ENCODE measurements at regions of chr3 and their contacts with region 1.

Region 1: DNA sequence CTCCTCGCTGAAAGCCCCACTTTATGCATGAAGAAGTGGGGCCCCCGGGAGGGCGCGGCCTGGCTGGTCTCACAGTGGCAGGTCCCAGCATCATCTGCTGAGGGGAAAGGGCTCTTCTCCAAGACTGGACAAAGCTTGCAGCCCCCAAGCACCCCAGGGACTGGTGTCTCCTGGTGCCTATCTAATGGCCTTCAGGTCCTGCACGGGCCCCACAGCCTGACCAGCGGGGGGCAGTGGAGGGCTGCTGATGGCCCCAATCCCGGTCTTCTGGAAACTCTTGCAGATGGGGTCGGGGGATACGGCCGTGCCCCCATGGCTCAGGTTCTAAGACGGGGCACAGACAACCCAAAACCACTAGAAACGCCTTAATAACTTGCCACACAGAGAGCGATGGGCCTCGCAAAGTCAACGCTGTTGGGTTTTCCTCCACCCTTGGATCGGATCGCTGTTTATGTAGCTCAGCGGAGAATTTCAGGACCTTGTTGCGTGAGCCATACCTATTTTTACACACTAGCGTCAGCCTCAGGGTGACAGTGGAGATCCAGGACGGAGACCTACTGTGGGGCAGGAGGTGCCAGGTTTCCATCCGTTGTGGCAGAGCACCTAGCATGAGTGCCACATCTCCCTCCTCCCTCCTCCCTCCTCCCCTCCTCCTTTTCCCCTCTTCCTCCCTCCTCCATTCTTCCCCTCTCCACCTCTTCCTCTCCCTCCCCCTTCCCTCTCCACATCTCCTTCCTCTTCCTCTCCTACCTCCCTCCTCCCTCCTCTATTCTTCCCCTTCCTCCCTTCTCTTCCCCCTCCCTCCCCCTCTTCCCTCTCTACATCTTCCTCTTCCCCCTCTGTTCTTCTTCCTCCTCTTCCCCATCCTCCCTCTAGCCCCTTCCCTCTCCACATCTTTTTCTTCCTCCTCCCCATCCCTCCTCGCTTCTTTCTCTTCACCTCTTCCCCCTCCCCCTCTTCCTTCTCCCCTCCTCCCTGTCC is 79.3 kb upstream of the ALDH1L1 start:
- DNase-seq: peak; percentile 78
- ATAC-seq: peak; percentile 93

Region 2: DNA sequence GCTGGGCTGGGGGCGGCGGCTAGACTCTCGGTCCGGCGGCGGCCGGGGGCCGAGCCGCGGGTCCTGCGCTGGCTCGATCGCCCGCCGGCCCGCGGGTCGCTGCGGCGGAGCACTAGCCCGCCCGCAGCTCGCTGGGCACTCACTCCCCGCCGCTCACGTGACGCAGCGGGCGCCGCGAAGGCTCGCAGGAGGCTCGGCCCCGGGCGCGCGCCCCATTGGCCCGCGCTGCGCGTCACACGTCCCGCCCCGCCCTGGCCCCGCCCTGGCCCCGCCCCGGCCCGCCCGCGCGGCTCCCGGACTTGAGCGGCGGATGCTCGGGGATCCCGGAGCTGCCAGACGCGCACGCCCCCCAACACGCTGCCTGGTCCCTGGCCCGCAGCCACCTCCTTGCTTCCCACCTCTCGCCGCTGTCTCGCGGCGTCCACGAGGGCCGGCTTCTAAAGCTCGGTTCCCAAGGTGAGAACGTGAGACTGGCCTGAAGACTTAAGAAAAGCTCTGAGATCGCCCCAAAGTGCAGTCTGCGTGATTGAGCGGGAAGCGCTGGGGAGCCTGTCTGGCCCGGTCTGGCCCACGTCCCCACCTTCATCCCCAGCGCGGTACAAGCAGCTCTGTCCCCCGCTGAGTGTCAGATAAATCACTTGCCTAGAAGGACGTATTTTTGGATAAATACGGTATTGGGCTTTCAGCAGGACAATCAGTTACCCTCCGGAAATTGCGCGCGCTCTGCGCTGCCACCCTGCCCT is 97.8 kb after region 1 on chr3 and contains the start of gene KLF15:
- intact Hi-C with region 1: loop called (anchors 5 kb)
- DNase-seq: peak; percentile 92
- ATAC-seq: peak; percentile 79
- total RNA-seq, gene KLF15: 34.0 TPM

Region 3: GRCh38 chr3:126389112-126389793 is 129.6 kb after region 1 on chr3:
- intact Hi-C with region 1: loop called (anchors 2 kb)
- DNase-seq: peak; percentile 95
- ATAC-seq: peak; percentile 98

Region 4: DNA sequence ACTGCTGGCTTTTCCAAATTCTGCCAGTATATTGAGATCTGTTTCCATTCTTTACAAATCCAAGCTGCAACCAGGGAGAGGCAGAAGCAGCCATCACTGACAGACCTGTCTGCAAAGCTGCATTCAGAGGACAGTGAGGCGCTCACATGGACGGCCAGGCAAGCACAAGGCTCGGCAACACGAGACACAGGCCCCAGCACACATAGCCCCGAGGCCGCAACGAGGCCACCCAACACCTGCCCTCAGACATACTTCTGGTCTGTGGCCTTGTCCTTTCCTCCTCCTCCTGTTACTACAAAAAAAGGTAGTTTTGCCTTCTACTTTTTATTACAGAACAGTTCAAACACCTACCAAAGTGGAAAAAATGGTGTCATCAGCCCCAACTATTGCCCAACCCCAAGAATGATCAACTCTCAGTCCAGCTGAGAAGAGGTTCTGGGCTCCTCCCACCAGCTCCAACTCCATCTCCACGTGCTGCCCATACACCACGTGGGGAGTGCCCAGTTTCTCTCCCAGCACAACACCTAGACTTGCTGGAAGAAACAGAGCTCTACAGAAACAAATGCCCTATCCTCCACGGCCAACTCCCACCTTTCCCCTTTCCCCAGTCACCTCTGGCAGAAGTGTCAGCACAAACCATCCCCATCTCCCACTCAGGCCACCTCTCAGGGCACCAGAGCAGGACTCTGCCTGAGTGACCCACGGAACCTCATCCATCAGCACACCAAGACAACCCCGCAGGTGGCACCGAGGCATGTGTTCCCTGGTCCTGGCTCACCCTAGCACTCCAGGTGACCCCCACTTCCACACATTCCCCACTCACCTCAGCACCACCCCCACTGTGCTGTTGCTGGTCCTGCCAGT is 208.6 kb after region 1 on chr3:
- intact Hi-C with region 1: no loop called
- DNase-seq: no peak
- ATAC-seq: no peak

Measured in Right ventricle myocardium superior (tissue), 1 donor.